Posterior cingulate gyrus (tissue), 11 donors: ENCODE measurements at regions of chrX and their contacts with region 1.

Region 1: GRCh38 chrX:43557792-43558191 is 98.3 kb upstream of the MAOA start:
- DNase-seq: peak in 7 of 10 donors; percentile 12 to 85 (median 47)

Region 2: DNA sequence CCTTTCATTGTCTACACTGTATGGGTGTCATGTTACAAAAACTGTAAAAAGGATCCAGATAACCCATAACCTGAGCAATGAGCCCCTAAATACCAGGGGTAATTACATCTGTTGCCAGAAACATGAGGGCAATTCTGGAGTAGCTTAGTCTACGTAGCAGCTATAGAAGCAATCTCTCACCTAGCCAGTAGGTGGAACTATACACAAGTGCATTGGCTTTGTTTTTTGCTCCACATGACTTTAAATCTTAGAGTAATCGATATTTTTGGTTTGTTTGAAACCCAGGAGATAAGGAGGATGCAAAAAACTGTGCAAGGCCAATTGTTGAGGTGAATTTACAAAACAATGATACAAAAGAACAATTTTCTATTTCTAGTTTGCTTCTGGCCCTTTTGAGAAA is 1776.3 kb before region 1 on chrX:
- intact Hi-C with region 1: loop called (anchors 5 kb)
- DNase-seq: no peak

Region 3: GRCh38 chrX:41796577-41796976 is 1761.2 kb before region 1 on chrX:
- intact Hi-C with region 1: loop called (anchors 5 kb)
- DNase-seq: no peak

Region 4: DNA sequence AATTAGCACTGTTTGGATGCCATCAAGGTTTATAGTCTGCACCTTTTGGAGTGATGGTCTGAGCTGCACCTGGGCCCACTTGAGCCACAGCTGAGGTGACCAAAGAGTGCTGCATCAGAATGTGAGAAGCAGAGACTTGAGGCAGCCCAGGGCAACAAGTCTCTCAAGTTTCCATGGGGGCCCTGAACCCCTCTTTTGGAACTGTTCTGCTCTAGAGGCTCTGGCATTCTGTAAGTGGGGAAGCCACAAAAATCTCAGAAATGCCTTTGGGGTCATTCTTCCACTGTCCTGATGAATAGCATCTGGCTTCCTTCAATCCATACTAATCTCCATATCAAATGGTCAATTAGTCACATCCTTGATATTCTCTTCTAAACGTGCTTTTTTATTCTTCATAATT is 200.1 kb before region 1 on chrX:
- intact Hi-C with region 1: loop called (anchors 10 kb)
- DNase-seq: no peak

Region 5: GRCh38 chrX:43750248-43750676 is 192.5 kb after region 1 on chrX:
- intact Hi-C with region 1: loop called (anchors 1 kb)
- DNase-seq: peak in 4 of 10 donors; percentile 8 to 28 (median 12)